Naive thymus-derived CD4-positive, alpha-beta T cell (primary cell): ENCODE measurements at regions of chr15 and their contacts with region 1.

Region 1: DNA sequence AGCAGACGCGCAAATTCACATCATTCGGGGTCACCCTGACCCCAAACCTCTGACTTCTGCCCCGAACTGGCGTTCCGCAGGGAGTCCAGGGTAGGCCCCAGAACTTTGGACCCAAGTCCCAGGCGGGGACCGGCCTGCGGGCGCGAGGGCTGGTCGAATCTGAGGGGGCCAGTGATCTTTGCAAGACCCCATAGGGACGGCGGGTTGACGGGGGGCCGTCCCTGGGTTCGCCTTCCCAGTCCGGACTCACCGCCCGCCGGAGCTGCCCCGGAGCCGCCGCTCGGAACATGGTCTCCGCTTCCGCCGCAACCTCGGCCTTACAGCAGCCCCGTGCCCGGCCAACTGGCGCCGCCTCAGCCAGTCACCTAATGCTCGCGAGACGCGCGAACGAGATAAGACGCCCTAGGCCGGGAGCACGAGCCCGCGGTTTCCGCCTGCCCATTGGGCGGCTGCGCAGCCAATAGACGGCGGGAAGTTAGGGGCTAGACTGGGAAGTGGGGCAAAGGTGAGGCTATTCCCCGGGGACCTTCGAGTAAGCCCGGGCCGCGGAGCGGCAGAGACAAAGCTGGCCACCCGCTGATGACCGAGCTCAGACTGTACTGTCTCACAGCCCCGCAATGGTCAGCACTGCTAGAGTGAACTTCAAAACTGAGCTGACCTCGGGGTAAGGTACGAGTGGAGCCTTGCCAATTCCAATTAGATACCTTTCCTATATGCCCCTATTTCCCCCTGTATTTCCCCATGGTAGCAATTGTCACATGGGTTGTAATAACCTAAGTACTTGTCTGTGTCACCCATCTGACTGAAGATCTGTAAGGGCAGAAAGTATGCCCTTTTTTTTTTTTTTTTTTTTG is at the start of gene ETFA:
- DNase-seq: peak; percentile 72 to 89 (median 81)
- ATAC-seq: peak; percentile 97
- H3K4me3 ChIP-seq: peak within 1 kb of the TSS; percentile 100
- H3K4me3 Mint-ChIP-seq: peak within 1 kb of the TSS; percentile 86 to 93 (median 90)
- H3K27ac ChIP-seq: peak within 1 kb of the TSS; percentile 72
- H3K27ac Mint-ChIP-seq: peak within 1 kb of the TSS; percentile 39 to 96 (median 89)
- H3K4me1 ChIP-seq: peaks cover 7 to 12% of the 10 kb centered on the region in 2 donors
- H3K4me1 Mint-ChIP-seq: peaks cover 21 to 50% (median 34%) of the 10 kb centered on the region in 7 donors
- H3K27me3 ChIP-seq: no peaks in the 10 kb centered on the region
- H3K27me3 Mint-ChIP-seq: peaks cover 0 to 2% (median 0%) of the 10 kb centered on the region in 5 donors
- total RNA-seq, gene ETFA: 38.3 to 102 (median 47.8) TPM

Region 2: DNA sequence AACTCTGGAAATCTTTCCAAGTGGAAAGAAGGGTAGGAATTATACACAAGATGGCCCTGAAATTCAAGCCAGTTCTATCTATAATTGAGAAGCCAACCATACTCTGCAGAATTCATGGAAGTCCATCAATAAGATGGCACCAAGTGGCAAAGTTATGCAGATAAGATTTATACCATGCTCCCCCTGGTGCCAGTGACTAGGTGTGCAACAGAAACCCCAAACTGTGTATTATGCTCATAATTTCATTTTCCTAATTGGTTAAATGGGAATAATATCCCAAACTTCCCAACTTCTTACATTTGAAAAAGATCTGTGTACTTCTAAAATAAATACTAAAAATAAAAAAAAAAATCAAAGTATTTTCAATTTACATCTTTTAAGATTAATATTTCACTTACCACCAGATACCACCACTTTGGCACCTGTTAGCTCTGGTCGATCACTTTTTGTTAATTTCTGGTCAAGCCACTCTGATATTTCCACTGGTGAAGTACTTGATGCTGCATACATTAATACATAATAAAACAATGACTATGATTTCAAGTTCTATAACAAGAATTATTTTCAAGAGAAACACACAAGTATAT is 26.0 kb before region 1 on chr15:
- CTCF ChIA-PET with region 1: interaction called, 3 read pairs
- POLR2A ChIA-PET with region 1: interaction called, 3 read pairs
- intact Hi-C with region 1: loop called (anchors 1 kb)
- DNase-seq: peak in 2 of 9 donors; percentile 2 to 9
- ATAC-seq: no peak
- H3K4me3 ChIP-seq: no peak overlapping the region
- H3K4me3 Mint-ChIP-seq: peak overlapping the region in 2 of 10 donors; percentile 69 to 82
- H3K27ac ChIP-seq: peak overlapping the region; percentile 69
- H3K27ac Mint-ChIP-seq: peak overlapping the region in 2 of 9 donors; percentile 93 to 94
- H3K4me1 ChIP-seq: peaks cover 11 to 27% of the 10 kb centered on the region in 2 donors
- H3K4me1 Mint-ChIP-seq: peaks cover 13 to 42% (median 31%) of the 10 kb centered on the region in 7 donors
- H3K27me3 ChIP-seq: no peaks in the 10 kb centered on the region
- H3K27me3 Mint-ChIP-seq: no peaks in the 10 kb centered on the region

Region 3: GRCh38 chr15:76324066-76324465 is 12.7 kb after region 1 on chr15:
- CTCF ChIA-PET with region 1: no interaction called
- POLR2A ChIA-PET with region 1: no interaction called
- intact Hi-C with region 1: no loop called
- DNase-seq: no peak
- ATAC-seq: no peak
- H3K4me3 ChIP-seq: no peak overlapping the region
- H3K4me3 Mint-ChIP-seq: no peak overlapping the region
- H3K27ac ChIP-seq: no peak overlapping the region
- H3K27ac Mint-ChIP-seq: no peak overlapping the region
- H3K4me1 ChIP-seq: no peaks in the 10 kb centered on the region
- H3K4me1 Mint-ChIP-seq: no peaks in the 10 kb centered on the region
- H3K27me3 ChIP-seq: no peaks in the 10 kb centered on the region
- H3K27me3 Mint-ChIP-seq: peaks cover 46 to 57% (median 52%) of the 10 kb centered on the region in 5 donors

Region 4: DNA sequence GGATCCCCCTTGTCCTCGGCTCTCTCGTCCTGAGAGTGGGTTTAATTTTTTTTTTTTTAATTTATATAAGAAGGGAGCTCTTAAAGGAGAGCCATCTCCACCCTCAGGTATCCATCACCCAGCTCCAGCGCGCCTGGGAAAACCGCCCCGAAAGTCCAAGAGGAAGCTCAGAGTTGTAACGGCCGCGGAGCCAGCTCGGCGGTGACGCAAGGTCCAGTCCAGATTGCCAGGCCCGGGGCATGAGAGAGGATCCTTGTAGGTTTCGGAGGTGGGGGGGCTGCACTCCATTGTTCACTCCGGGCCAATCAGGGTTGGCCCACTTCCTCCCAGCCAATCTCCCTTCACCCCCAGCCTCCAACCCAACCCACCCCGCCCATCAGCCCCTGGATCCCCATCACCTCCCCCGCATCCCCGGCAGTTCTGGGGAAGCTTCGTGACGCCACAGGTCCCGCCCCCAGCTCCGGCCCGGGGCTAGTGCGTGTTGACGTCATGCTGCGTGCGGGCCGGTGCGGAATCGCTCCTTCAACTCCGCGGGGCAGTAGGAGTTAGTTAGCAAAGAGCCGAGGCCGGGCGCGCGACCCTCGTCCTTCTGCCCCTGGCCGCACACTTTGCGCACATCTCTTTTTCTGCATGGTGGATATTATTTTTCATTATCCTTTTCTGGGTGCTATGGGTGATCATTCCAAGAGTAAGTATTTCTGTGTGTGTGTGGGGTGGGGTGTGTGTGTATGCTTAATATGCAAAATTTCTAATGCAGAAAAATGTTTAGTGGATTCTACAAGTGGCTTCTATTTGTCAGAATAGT is 25.1 kb after region 1 on chr15 and contains the start of gene ISL2:
- CTCF ChIA-PET with region 1: no interaction called
- POLR2A ChIA-PET with region 1: no interaction called
- intact Hi-C with region 1: loop called (anchors 1 to 2 kb)
- DNase-seq: peak in 2 of 9 donors; percentile 21 to 83
- ATAC-seq: peak; percentile 52
- H3K4me3 ChIP-seq: peak within 1 kb of the TSS; percentile 28
- H3K4me3 Mint-ChIP-seq: peak within 1 kb of the TSS; percentile 61 to 84 (median 76)
- H3K27ac ChIP-seq: no peak within 1 kb of the TSS
- H3K27ac Mint-ChIP-seq: peak within 1 kb of the TSS in 5 of 9 donors; percentile 5 to 77 (median 39)
- H3K4me1 ChIP-seq: peaks cover 32 to 59% of the 10 kb centered on the region in 2 donors
- H3K4me1 Mint-ChIP-seq: peaks cover 37 to 60% (median 48%) of the 10 kb centered on the region in 7 donors
- H3K27me3 ChIP-seq: peaks cover 11 to 47% of the 10 kb centered on the region in 2 donors
- H3K27me3 Mint-ChIP-seq: peaks cover 73 to 84% (median 75%) of the 10 kb centered on the region in 5 donors
- total RNA-seq, gene ISL2: 0.21 to 0.51 (median 0.27) TPM in 3 of 5 experiments, not detected in the others